ENCODE measurements at regions of chr18 and their contacts with region 1.

Region 1: DNA sequence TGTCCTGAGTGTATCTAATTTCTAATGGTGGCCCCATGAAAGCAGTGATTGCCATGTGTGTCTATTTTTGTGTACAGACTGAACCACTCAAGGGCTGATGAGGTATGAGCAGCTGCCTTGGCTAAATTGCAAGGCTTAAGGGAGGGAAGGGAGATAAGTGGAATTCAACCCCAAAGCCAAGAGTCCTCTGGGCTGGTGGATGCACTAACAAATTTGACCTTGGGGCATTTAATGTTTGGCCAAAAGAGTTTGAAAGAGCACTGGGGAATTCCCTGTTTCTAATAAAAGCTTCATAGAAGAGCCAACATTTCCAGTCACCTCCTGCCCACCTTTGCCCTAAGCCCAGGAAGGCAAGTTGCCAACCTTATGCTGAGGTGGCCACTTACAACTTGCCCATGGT is 172.1 kb downstream of the SETBP1 start:
- DNase-seq: no peak
- CTCF ChIP-seq: no peak

Region 2: GRCh38 chr18:44594799-44595467 is 257.9 kb before region 1 on chr18:
- CTCF ChIA-PET with region 1: no interaction called
- POLR2A ChIA-PET with region 1: no interaction called
- DNase-seq: no peak
- CTCF ChIP-seq: no peak

Region 3: DNA sequence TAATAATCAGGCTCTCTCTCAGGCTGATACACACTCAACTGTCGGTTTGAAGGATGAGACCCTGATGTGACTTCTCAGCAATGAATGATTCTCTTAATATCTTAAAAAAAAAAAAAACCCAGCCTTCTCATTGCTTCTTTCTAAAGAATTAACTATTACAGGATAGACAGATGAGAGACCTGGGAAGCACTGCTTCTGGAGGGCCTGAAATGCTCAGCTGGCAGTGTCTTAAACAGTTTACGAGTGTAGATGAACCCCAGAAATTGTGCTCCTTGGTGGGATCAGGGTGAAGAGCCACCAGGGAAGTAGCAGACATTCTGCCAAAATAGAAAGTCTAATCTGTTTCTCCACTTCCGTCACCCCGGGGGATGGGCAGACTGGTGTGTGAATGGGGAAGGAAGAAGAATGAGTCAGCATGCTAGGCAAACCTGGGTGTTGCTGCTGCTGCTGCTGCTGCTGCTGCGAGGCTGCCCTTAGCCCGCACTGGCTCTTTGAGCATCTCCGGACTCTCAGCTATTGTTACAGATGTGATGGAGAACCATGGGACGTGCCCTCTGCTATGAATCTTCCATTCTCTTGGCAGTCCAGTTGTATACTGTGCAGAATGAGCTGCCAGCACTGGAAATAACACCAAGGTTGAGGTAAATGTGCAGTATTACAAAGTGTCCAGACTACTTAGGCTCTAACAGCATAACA is 13.7 kb before region 1 on chr18:
- CTCF ChIA-PET with region 1: interaction called, 13 read pairs
- POLR2A ChIA-PET with region 1: no interaction called
- DNase-seq: peak; percentile 71
- CTCF ChIP-seq: no peak

Region 4: GRCh38 chr18:44870631-44871502 is 18.0 kb after region 1 on chr18:
- CTCF ChIA-PET with region 1: interaction called, 11 read pairs
- POLR2A ChIA-PET with region 1: no interaction called
- DNase-seq: no peak
- CTCF ChIP-seq: peak; percentile 27

Region 5: DNA sequence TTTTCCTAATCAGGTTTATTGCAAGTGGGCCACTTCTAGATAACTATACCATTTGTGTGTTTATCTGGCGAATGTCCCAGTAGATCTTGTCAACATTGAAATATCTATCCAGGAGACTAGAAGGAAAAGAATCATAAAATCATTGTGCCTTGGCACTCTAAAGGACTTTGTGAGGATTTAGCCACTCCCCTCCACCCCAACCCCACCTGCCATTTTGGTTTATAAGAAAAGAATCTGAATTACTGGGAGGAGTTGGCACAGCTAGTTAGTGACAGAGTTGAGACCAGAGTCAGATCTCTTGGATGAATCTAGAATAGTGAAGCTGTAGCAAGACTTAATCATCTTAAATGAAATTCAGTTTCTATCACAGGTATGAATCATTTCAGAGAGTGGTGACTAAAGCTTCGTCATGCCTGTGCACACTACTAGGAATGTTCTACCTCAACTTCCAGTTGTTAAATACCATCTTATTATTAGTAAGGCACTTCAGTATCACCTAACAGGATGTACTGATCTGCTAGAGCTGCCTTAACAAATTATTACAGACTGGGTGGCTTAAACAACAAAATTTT is 549.8 kb after region 1 on chr18:
- CTCF ChIA-PET with region 1: no interaction called
- POLR2A ChIA-PET with region 1: no interaction called
- DNase-seq: no peak
- CTCF ChIP-seq: no peak

Region 6: DNA sequence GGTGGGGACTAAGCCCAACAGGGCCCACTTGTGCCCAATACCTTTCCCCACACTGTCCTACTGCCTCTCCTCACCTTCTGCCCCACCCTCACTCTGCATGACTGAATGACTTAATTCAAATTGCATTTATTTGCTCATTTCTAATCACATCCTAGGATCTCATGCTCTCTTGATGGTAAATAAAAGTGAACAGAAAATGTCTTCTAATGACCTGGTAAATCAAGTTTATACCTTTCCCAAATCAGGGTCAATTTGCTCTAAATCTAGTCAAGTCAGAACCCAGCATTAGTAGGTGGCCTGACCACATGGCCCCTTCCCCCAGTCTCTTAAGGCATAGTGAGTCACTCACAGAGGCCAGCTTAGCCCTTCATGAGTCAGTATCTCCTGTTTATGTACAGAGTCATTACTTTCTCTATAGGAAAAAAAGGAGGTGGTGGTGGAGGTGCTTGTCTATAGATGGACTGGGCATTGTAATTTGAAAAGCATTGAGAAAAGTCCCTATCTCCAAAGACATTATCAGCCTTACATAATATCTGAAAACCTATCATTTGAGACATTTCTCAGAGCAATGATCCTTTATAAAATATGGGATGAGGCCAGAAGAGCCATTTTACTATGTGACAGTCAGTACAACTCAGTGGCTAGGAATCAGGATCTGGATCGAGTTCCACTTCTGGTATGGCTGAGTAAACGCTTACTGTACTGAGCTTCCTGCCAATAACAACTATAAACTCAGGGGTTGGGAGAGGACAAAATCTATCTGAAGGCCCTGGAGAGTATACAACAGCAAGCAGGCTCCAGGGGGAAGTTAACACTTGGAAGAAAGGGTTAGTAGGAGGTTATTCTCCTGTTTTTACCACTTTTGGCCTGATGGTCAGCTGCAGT is 950.0 kb after region 1 on chr18:
- CTCF ChIA-PET with region 1: no interaction called
- POLR2A ChIA-PET with region 1: no interaction called
- DNase-seq: no peak
- CTCF ChIP-seq: no peak